Endothelial cell of umbilical vein (primary cell): ENCODE measurements at regions of chr17 and their contacts with region 1.

Region 1: GRCh38 chr17:34361478-34362061 is 1.5 kb downstream of the CCL1 start:
- DNase-seq: peak; percentile 93
- H3K4me3 ChIP-seq: no peak overlapping the region
- H3K27ac ChIP-seq: no peak overlapping the region
- H3K4me1 ChIP-seq: peaks cover 7% of the 10 kb centered on the region
- H3K27me3 ChIP-seq: peaks cover 0 to 2% of the 10 kb centered on the region in 2 experiments
- CTCF ChIP-seq: peak; percentile 99 to 100
- POLR2A ChIP-seq: no peak

Region 2: GRCh38 chr17:33750943-33751701 is 610.4 kb before region 1 on chr17:
- CTCF ChIA-PET with region 1: interaction called, 11 read pairs
- POLR2A ChIA-PET with region 1: no interaction called
- dilution Hi-C with region 1: no loop called
- intact Hi-C with region 1: no loop called
- DNase-seq: peak; percentile 64
- H3K4me3 ChIP-seq: peak overlapping the region in 1 of 3 experiments; percentile 7
- H3K27ac ChIP-seq: no peak overlapping the region
- H3K4me1 ChIP-seq: no peaks in the 10 kb centered on the region
- H3K27me3 ChIP-seq: no peaks in the 10 kb centered on the region
- CTCF ChIP-seq: peak; percentile 70 to 79
- POLR2A ChIP-seq: no peak

Region 3: DNA sequence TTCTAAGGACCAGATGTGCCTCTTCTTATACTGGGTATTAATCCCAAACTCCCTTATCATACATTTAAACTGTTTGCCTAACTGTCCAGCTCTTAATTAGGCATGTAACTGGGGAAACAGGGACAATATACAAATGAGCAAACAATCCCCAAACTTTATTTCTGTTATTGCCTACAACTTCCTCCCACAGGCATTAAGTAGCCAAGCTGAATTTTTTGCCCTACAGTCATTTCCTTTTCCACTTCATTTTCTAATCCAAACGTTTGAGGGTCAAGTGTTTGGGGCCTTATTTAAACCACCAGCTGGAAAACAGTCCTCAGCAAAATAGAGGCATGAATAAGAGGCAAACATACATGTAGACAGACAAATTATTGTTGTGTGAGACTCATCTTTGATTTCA is 183.9 kb before region 1 on chr17:
- CTCF ChIA-PET with region 1: interaction called, 197 read pairs
- POLR2A ChIA-PET with region 1: interaction called, 4 read pairs
- dilution Hi-C with region 1: no loop called
- intact Hi-C with region 1: no loop called
- DNase-seq: peak; percentile 90
- H3K4me3 ChIP-seq: no peak overlapping the region
- H3K27ac ChIP-seq: peak overlapping the region; percentile 67
- H3K4me1 ChIP-seq: peaks cover 19% of the 10 kb centered on the region
- H3K27me3 ChIP-seq: peaks cover 21 to 25% of the 10 kb centered on the region in 2 experiments
- CTCF ChIP-seq: no peak
- POLR2A ChIP-seq: no peak

Region 4: DNA sequence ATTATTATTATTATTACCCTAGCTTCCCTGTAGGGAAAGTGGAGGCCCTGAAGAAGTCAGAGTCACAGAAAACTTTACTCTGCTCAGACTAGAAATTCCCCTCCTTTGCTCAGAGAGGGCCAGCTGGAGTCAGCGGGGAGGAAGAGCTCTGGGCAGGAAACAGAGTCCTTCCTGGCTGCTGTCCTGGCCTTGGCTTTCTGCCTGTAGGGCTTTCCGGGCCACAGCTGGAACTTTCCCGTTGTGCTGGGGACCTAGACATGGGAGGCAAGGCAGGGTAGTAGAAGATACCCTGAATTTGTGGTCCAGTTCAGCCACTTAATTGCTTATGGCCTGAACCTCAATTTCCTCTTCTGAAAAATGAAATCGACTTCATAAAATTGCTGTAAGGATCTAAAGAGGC is 120.5 kb before region 1 on chr17:
- CTCF ChIA-PET with region 1: interaction called, 51 read pairs
- POLR2A ChIA-PET with region 1: no interaction called
- dilution Hi-C with region 1: no loop called
- intact Hi-C with region 1: no loop called
- DNase-seq: peak; percentile 79
- H3K4me3 ChIP-seq: no peak overlapping the region
- H3K27ac ChIP-seq: peak overlapping the region; percentile 97
- H3K4me1 ChIP-seq: peaks cover 74% of the 10 kb centered on the region
- H3K27me3 ChIP-seq: no peaks in the 10 kb centered on the region
- CTCF ChIP-seq: no peak
- POLR2A ChIP-seq: no peak

Region 5: GRCh38 chr17:34275881-34276280 is 85.7 kb before region 1 on chr17:
- CTCF ChIA-PET with region 1: interaction called, 28 read pairs
- POLR2A ChIA-PET with region 1: no interaction called
- dilution Hi-C with region 1: no loop called
- intact Hi-C with region 1: no loop called
- DNase-seq: peak; percentile 90
- H3K4me3 ChIP-seq: no peak overlapping the region
- H3K27ac ChIP-seq: no peak overlapping the region
- H3K4me1 ChIP-seq: peaks cover 8% of the 10 kb centered on the region
- H3K27me3 ChIP-seq: peaks cover 2 to 7% of the 10 kb centered on the region in 2 experiments
- CTCF ChIP-seq: no peak
- POLR2A ChIP-seq: no peak

Region 6: DNA sequence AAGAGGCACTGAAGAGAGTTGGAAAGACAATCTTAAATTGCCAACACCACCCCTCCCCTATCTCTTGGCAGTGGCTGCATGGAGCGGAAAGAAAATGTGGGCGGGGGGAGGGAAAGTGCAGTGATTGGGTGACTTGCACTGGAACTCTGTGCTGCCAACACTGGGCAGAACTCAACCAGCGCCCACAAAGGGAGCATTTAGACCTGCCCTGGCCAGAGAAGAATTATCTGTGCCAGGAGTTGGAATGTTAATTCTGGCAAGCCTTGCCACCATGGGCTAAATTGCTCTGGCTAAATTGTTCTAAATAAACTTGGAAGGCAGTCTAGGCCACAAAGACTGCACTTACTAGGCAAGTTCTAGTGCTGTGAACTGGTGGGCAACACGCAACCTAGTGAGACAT is 11.8 kb before region 1 on chr17:
- CTCF ChIA-PET with region 1: interaction called, 30 read pairs
- POLR2A ChIA-PET with region 1: no interaction called
- dilution Hi-C with region 1: no loop called
- intact Hi-C with region 1: no loop called
- DNase-seq: no peak
- H3K4me3 ChIP-seq: no peak overlapping the region
- H3K27ac ChIP-seq: no peak overlapping the region
- H3K4me1 ChIP-seq: no peaks in the 10 kb centered on the region
- H3K27me3 ChIP-seq: peaks cover 5 to 8% of the 10 kb centered on the region in 2 experiments
- CTCF ChIP-seq: no peak
- POLR2A ChIP-seq: no peak

Region 7: GRCh38 chr17:34443619-34444469 is 82.3 kb after region 1 on chr17:
- CTCF ChIA-PET with region 1: no interaction called
- POLR2A ChIA-PET with region 1: no interaction called
- dilution Hi-C with region 1: no loop called
- intact Hi-C with region 1: no loop called
- DNase-seq: no peak
- H3K4me3 ChIP-seq: no peak overlapping the region
- H3K27ac ChIP-seq: no peak overlapping the region
- H3K4me1 ChIP-seq: no peaks in the 10 kb centered on the region
- H3K27me3 ChIP-seq: no peaks in the 10 kb centered on the region
- CTCF ChIP-seq: no peak
- POLR2A ChIP-seq: no peak

Region 8: DNA sequence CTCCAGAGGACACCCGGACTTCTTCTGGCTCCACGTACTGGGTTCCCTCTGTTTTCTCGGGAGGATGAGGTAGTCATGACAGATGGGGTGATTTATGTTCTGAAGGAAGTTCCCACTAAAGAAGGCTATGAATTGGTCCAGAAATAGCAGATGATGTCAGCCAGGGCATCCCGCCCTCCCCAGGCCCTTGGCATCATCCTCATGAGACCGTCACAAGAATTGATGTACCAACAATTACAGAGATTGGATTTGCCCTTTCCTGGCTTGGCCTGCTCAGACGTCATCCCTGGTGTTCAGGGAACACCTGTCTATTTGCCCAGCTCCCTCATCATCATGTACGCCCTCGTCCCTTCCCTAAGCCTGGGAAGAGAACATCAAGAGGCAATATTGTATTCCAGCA is 104.2 kb after region 1 on chr17:
- CTCF ChIA-PET with region 1: no interaction called
- POLR2A ChIA-PET with region 1: no interaction called
- dilution Hi-C with region 1: no loop called
- intact Hi-C with region 1: no loop called
- DNase-seq: no peak
- H3K4me3 ChIP-seq: no peak overlapping the region
- H3K27ac ChIP-seq: no peak overlapping the region
- H3K4me1 ChIP-seq: no peaks in the 10 kb centered on the region
- H3K27me3 ChIP-seq: no peaks in the 10 kb centered on the region
- CTCF ChIP-seq: no peak
- POLR2A ChIP-seq: no peak